Mammary epithelial cell (primary cell): ENCODE measurements at regions of chr11 and their contacts with region 1.

Region 1: DNA sequence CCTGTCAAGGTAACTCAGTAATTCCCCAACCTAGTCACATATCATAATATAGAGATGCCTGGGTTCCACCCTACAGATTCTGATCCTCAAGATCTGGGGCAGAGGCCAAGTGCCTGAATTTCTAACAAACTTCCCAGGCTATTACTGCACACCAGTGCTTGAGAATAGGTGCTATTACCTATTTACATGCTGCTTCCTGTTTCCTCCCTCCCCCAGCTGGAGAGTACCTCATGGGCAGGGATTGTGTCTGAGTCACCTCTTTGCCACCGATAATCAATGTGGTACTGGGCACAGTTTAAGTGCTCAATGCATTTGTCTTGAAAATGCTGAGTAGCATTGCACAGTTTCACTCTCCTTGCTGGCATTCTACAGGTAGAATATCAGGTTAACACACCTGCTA is 582.2 kb upstream of the CADM1 start:
- DNase-seq: no peak
- H3K4me3 ChIP-seq: no peak overlapping the region
- H3K27ac ChIP-seq: no peak overlapping the region
- H3K4me1 ChIP-seq: no peaks in the 10 kb centered on the region
- H3K27me3 ChIP-seq: no peaks in the 10 kb centered on the region
- CTCF ChIP-seq: no peak

Region 2: GRCh38 chr11:116043857-116044256 is 42.6 kb before region 1 on chr11:
- CTCF ChIA-PET with region 1: no interaction called
- dilution Hi-C with region 1: no loop called
- in situ Hi-C with region 1: no loop called
- intact Hi-C with region 1: no loop called
- DNase-seq: no peak
- H3K4me3 ChIP-seq: no peak overlapping the region
- H3K27ac ChIP-seq: no peak overlapping the region
- H3K4me1 ChIP-seq: no peaks in the 10 kb centered on the region
- H3K27me3 ChIP-seq: peaks cover 5% of the 10 kb centered on the region
- CTCF ChIP-seq: no peak

Region 3: GRCh38 chr11:116109228-116109627 is 22.8 kb after region 1 on chr11:
- CTCF ChIA-PET with region 1: no interaction called
- dilution Hi-C with region 1: no loop called
- in situ Hi-C with region 1: no loop called
- intact Hi-C with region 1: no loop called
- DNase-seq: peak; percentile 55
- H3K4me3 ChIP-seq: no peak overlapping the region
- H3K27ac ChIP-seq: no peak overlapping the region
- H3K4me1 ChIP-seq: peaks cover 3% of the 10 kb centered on the region
- H3K27me3 ChIP-seq: no peaks in the 10 kb centered on the region
- CTCF ChIP-seq: no peak

Region 4: DNA sequence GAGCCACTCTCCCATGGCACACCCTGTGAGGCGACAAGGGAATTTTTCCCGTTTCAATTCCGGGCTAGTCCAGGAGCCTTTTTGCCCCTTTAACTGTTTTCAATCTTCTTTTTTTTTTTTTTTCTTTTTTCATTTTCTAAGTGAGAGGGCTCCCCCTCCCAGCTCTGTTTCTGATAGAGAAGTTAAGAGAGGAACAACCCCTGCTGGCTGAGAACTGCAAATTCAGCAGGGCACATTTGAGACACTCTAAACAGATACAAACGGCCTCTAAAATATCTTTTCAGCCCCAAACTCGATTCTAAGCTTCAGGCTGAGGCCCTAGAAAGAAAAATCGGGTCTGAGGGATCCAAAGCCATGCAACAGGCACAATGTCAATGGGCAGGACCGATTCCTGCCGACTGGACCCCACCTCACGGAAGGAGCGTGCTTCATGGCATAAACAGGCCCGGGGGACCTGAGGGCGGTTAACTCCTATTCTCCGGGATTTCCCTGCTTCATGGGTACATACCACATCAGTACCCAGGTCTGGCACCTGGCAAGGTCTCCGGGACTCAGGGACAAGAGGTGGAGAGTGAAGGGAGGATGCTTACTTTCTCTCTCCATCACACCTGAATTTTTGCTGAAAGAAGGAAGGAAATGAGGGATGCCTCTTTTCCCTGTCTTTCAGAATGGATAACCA is 58.9 kb after region 1 on chr11:
- CTCF ChIA-PET with region 1: no interaction called
- dilution Hi-C with region 1: no loop called
- in situ Hi-C with region 1: no loop called
- intact Hi-C with region 1: no loop called
- DNase-seq: no peak
- H3K4me3 ChIP-seq: no peak overlapping the region
- H3K27ac ChIP-seq: no peak overlapping the region
- H3K4me1 ChIP-seq: no peaks in the 10 kb centered on the region
- H3K27me3 ChIP-seq: no peaks in the 10 kb centered on the region
- CTCF ChIP-seq: peak in 1 of 2 donors; percentile 20

Region 5: GRCh38 chr11:116166573-116167465 is 80.4 kb after region 1 on chr11:
- CTCF ChIA-PET with region 1: no interaction called
- dilution Hi-C with region 1: loop called (anchors 5 kb)
- in situ Hi-C with region 1: no loop called
- intact Hi-C with region 1: no loop called
- DNase-seq: no peak
- H3K4me3 ChIP-seq: no peak overlapping the region
- H3K27ac ChIP-seq: no peak overlapping the region
- H3K4me1 ChIP-seq: no peaks in the 10 kb centered on the region
- H3K27me3 ChIP-seq: no peaks in the 10 kb centered on the region
- CTCF ChIP-seq: no peak

Region 6: GRCh38 chr11:116618461-116618860 is 532.0 kb after region 1 on chr11:
- CTCF ChIA-PET with region 1: no interaction called
- dilution Hi-C with region 1: no loop called
- in situ Hi-C with region 1: no loop called
- intact Hi-C with region 1: no loop called
- DNase-seq: no peak
- H3K4me3 ChIP-seq: no peak overlapping the region
- H3K27ac ChIP-seq: no peak overlapping the region
- H3K4me1 ChIP-seq: no peaks in the 10 kb centered on the region
- H3K27me3 ChIP-seq: peaks cover 2% of the 10 kb centered on the region
- CTCF ChIP-seq: no peak